Adrenal gland (tissue), 19 donors: ENCODE measurements at regions of chr12 and their contacts with region 1.

Region 1: GRCh38 chr12:47949441-47950308 is 13.7 kb upstream of the TMEM106C start:
- DNase-seq: peak; percentile 82 to 90 (median 86)
- H3K4me3 ChIP-seq: no peak overlapping the region
- H3K27ac ChIP-seq: no peak overlapping the region
- H3K4me1 ChIP-seq: no peaks in the 10 kb centered on the region
- H3K27me3 ChIP-seq: no peaks in the 10 kb centered on the region
- CTCF ChIP-seq: peak; percentile 81 to 92 (median 88)
- POLR2A ChIP-seq: no peak

Region 2: DNA sequence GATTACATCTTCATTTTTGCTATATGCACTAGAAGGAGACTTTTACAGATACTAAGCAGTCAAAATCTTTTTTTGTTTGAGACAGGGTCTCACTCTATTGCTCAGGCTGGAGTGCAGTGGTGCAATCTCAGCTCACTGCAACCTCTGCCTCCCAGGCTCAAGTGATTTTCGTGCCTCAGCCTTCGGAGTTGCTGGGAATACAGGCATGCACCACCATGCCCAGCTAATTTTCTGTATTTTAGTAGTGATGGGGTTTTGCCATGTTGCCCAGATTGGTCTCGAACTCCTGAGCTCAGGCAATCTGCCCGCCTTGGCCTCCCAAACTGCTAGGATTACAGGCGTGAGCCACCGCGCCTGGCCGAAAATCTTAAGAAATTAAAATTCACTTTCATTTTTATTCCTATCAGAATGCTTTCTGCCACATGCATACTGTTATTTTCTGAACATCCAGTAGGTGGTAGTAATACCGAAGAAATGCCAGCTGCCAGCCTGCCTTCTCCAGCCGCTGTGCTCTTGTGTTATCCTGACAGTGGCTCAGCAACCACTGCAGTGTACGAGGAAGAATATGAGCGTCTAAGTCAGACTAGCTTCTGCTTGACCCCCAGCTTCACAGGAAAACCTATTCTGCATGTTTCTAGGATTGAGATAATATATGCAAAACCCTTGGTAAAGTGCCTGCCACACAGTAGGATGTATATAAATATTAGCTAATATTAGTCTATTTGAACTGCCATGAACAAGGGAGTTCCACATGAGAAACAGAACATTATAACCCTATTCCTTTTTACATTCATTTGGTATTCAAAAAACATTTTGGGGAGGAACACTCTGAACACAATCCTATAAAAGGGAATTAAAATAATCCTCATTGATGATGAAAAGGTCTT is 298.1 kb before region 1 on chr12:
- intact Hi-C with region 1: no loop called
- DNase-seq: peak; percentile 58 to 86 (median 73)
- H3K4me3 ChIP-seq: peak overlapping the region in 2 of 4 donors; percentile 13 to 39
- H3K27ac ChIP-seq: peak overlapping the region in 2 of 5 donors; percentile 24 to 43
- H3K4me1 ChIP-seq: peaks cover 0 to 7% of the 10 kb centered on the region in 2 donors
- H3K27me3 ChIP-seq: no peaks in the 10 kb centered on the region
- CTCF ChIP-seq: peak; percentile 69 to 93 (median 87)
- POLR2A ChIP-seq: no peak

Region 3: GRCh38 chr12:47715393-47715876 is 234.2 kb before region 1 on chr12:
- intact Hi-C with region 1: loop called in 1 of 2 experiments (anchors 10 kb)
- DNase-seq: peak; percentile 80 to 93 (median 86)
- H3K4me3 ChIP-seq: no peak overlapping the region
- H3K27ac ChIP-seq: peak overlapping the region in 3 of 5 donors; percentile 63 to 82 (median 71)
- H3K4me1 ChIP-seq: peaks cover 24 to 37% of the 10 kb centered on the region in 2 donors
- H3K27me3 ChIP-seq: no peaks in the 10 kb centered on the region
- CTCF ChIP-seq: peak; percentile 60 to 93 (median 88)
- POLR2A ChIP-seq: no peak

Region 4: GRCh38 chr12:47742253-47742825 is 207.3 kb before region 1 on chr12:
- intact Hi-C with region 1: loop called in 1 of 2 experiments (anchors 10 kb)
- DNase-seq: peak in 6 of 7 donors; percentile 50 to 78 (median 61)
- H3K4me3 ChIP-seq: no peak overlapping the region
- H3K27ac ChIP-seq: no peak overlapping the region
- H3K4me1 ChIP-seq: peaks cover 8 to 24% of the 10 kb centered on the region in 2 donors
- H3K27me3 ChIP-seq: no peaks in the 10 kb centered on the region
- CTCF ChIP-seq: peak; percentile 91 to 98 (median 94)
- POLR2A ChIP-seq: no peak

Region 5: GRCh38 chr12:47863467-47863866 is 86.2 kb before region 1 on chr12:
- intact Hi-C with region 1: loop called in 1 of 2 experiments (anchors 5 kb)
- DNase-seq: peak in 2 of 7 donors; percentile 14 to 41
- H3K4me3 ChIP-seq: no peak overlapping the region
- H3K27ac ChIP-seq: peak overlapping the region in 2 of 5 donors; percentile 22 to 46
- H3K4me1 ChIP-seq: peaks cover 6 to 15% of the 10 kb centered on the region in 2 donors
- H3K27me3 ChIP-seq: no peaks in the 10 kb centered on the region
- CTCF ChIP-seq: no peak
- POLR2A ChIP-seq: no peak

Region 6: GRCh38 chr12:47904713-47905310 is 44.9 kb before region 1 on chr12 and contains the start of gene VDR:
- intact Hi-C with region 1: loop called in 1 of 2 experiments (anchors 5 kb)
- DNase-seq: peak; percentile 79 to 89 (median 82)
- H3K4me3 ChIP-seq: peak within 1 kb of the TSS in 3 of 4 donors; percentile 11 to 84 (median 59)
- H3K27ac ChIP-seq: peak within 1 kb of the TSS in 3 of 5 donors; percentile 65 to 89 (median 71)
- H3K4me1 ChIP-seq: peaks cover 21 to 43% of the 10 kb centered on the region in 2 donors
- H3K27me3 ChIP-seq: no peaks in the 10 kb centered on the region
- CTCF ChIP-seq: peak in 1 of 6 experiments; percentile 30
- POLR2A ChIP-seq: peak in 1 of 2 donors; percentile 80
- total RNA-seq, gene VDR: 6.9 to 80.1 (median 21.0) TPM

Region 7: GRCh38 chr12:48142818-48143674 is 193.4 kb after region 1 on chr12:
- intact Hi-C with region 1: no loop called
- DNase-seq: no peak
- H3K4me3 ChIP-seq: no peak overlapping the region
- H3K27ac ChIP-seq: no peak overlapping the region
- H3K4me1 ChIP-seq: no peaks in the 10 kb centered on the region
- H3K27me3 ChIP-seq: no peaks in the 10 kb centered on the region
- CTCF ChIP-seq: no peak
- POLR2A ChIP-seq: no peak